Ascending aorta (tissue), 2 donors: ENCODE measurements at regions of chr4 and their contacts with region 1.

Region 1: DNA sequence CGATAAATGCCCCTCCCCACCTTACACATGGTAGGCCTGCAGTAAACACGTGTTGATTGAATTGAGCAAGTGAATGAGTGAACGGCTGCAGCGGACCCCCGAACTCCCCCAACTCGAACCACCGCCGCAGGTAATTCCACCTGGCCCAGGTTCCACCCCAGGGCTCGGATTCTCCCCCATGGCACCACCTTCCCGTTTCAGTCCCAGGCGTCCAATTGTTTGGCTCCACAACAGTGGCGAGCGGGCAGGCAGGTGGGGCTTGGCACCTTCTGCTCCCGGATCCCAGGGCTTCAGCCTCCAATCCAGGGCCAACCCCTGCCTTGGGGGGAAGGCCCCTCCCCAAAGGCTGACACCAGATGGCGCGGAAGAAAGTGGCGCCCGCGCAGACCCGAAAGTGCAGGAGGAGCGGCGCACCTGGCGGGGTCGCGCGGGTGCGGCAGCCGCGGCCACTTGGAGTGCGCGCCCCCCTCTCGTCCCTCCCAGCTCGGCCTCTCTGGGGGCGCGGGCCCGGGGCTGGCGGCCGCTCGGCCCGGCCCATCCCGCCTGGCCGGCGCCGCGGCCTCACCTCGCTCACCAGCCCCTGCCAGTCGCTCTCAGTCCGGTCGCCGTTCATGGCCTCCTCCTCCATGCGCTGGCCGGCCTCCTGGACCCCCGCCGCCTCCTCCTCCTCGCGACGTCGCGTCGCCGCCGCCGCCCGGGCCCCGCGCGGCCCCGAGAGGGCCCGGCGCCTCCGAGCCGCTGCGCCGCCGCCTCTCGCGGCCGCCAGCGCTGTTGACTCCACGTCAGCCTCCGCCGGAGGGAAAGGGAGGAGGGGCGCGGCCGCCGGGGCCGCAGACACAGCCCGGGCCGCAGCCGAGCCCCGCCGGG is at the start of gene CCDC149:
- DNase-seq: peak in 1 of 2 donors; percentile 83
- H3K4me3 ChIP-seq: peak within 1 kb of the TSS; percentile 91 to 93
- H3K27ac ChIP-seq: peak within 1 kb of the TSS; percentile 93 to 97
- H3K4me1 ChIP-seq: peaks cover 0 to 8% of the 10 kb centered on the region in 2 donors
- H3K27me3 ChIP-seq: no peaks in the 10 kb centered on the region
- CTCF ChIP-seq: no peak
- total RNA-seq, gene CCDC149: 8.7 TPM

Region 2: GRCh38 chr4:24472514-24473308 is 439.8 kb before region 1 on chr4:
- intact Hi-C with region 1: loop called (anchors 10 kb)
- DNase-seq: peak; percentile 31 to 88
- H3K4me3 ChIP-seq: peak overlapping the region; percentile 60 to 81
- H3K27ac ChIP-seq: peak overlapping the region; percentile 31 to 57
- H3K4me1 ChIP-seq: peaks cover 8 to 15% of the 10 kb centered on the region in 2 donors
- H3K27me3 ChIP-seq: no peaks in the 10 kb centered on the region
- CTCF ChIP-seq: peak; percentile 54 to 73 (median 66)

Region 3: DNA sequence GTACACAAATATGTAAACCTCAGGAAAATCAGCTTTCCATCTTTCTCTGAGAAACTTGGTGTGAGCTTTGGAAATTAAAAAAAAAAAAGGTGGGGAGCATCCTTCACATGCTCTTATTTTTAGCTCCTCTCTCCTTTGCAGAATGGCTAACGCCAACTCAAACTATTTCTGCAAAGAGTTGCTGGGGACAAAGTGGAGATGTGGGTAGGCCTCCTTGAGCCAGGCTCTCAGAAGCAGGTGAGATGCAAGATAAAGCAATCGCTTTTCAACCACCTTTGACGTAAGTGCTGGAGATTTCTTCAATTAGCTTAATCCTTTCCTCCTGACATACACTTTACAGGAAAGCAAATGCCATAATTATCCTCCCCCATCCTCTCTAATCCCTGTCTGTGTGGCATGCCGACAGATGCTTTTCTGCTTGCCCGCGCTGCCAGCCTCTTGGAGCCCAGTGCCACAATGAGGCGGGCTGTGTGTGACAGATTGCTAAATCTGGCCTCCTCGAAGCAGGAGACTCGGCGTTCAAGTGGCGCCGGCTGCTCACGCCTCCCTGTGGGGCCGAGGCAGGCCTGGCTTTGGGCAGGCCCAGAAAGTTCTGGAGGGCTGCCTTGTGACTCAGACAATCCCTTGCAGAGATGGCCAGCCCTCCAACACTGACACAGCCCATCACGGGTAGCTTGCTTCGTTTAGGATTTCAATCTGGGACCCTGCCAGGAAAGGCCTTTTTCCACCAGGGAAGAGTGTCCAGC is 182.1 kb before region 1 on chr4:
- intact Hi-C with region 1: loop called (anchors 2 kb)
- DNase-seq: peak; percentile 63 to 94
- H3K4me3 ChIP-seq: no peak overlapping the region
- H3K27ac ChIP-seq: peak overlapping the region; percentile 63 to 78
- H3K4me1 ChIP-seq: peaks cover 3 to 40% of the 10 kb centered on the region in 2 donors
- H3K27me3 ChIP-seq: no peaks in the 10 kb centered on the region
- CTCF ChIP-seq: peak in 1 of 3 experiments; percentile 13

Region 4: GRCh38 chr4:24850674-24851073 is 61.8 kb before region 1 on chr4:
- intact Hi-C with region 1: loop called (anchors 2 kb)
- DNase-seq: peak in 1 of 2 donors; percentile 90
- H3K4me3 ChIP-seq: no peak overlapping the region
- H3K27ac ChIP-seq: peak overlapping the region; percentile 69 to 79
- H3K4me1 ChIP-seq: peaks cover 10 to 37% of the 10 kb centered on the region in 2 donors
- H3K27me3 ChIP-seq: no peaks in the 10 kb centered on the region
- CTCF ChIP-seq: no peak